AG04450 (cell line): ENCODE measurements at regions of chrX and their contacts with region 1.

Region 1: GRCh38 chrX:136168929-136169735 is 21.8 kb downstream of the FHL1 start:
- DNase-seq: peak; percentile 90
- H3K4me3 ChIP-seq: no peak overlapping the region
- H3K27ac ChIP-seq: peak overlapping the region; percentile 81
- H3K27me3 ChIP-seq: no peaks in the 10 kb centered on the region
- CTCF ChIP-seq: 0 out of 2 replicates have a peak, but pooled peaks have one; percentile 5

Region 2: DNA sequence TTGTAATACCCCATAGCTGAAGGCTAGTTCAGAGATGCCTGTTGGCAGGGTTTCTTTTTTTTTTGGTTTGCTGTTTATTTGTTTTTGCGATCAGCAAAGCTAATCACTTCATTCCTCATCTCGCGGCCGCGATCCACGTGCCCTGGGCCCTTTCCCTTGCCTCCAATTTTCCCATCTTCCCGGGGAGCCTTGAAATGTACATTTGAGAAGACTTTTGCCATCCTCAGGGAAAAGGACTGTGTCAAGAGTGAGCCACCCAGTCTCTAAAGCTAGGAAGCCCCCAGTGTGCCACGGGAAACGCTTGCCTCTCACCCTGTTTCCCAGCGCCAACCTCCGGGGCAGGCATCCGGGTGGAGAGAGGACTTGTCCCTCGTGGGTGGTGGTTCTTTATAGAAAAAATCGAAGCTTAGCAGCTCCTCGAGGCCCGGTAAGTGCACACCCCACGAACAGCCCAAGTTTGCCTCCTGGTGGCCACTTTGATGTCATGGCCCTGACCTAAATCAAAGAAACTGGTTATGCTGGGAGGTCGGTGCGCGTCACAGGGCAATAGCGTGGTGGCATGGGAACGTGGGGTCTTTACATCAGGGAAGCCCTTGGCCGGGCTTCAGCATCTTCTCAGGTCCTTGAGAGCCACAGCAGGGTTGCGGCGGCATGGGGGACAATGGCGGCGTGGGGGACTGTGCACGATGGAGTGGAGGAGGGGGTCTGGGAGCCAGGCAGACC is 40.0 kb after region 1 on chrX:
- CTCF ChIA-PET with region 1: interaction called, 10 read pairs
- POLR2A ChIA-PET with region 1: no interaction called
- DNase-seq: no peak
- H3K4me3 ChIP-seq: no peak overlapping the region
- H3K27ac ChIP-seq: no peak overlapping the region
- H3K27me3 ChIP-seq: no peaks in the 10 kb centered on the region
- CTCF ChIP-seq: peak; percentile 60